ENCODE measurements at regions of chr16 and their contacts with region 1.

Region 1: DNA sequence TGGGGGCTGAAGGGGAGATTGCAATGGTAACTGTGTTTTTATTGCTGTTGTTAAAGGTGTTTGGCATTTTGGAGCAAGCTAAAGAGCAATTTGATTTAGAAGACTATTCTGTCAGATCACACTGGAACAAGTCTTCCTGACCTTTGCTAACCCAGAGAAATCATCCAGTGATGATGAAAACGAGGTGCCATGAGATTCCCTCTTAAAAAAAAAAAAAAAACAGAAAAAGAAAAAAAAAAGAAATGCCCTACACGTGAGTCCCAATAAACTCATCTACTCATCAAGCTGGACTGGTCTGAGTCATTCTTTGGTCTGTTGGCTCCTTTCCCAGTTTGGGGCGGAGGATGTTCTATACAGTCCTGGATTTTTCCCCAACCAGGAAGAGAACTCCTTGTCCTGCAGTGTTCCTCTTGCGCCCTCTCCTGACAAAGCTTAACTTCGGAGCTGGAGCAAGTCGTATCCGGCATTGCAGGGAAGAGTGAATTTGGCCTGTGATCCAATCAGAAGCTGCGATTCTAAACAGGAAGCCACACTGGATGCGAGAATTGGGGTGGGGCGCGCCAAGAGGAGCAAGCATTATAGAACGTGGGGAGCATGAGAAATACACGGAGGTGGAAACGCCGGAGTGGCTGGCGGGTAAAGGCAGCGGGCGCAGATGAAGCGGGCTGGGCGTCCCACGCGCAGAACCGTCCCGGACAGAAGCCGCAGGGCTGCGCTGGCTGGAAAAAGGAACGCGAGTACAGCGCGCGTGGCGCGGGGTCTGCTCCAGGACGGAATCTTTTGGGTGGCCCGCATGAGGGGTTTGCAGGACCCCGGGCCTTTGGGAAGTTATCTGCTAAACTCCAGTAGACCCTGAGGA is 22.4 kb upstream of the CRYM start:
- DNase-seq: peak; percentile 89 to 100 (median 89)
- ATAC-seq: peak; percentile 87
- H3K4me3 ChIP-seq: peak overlapping the region; percentile 20
- H3K4me1 ChIP-seq: peaks cover 3% of the 10 kb centered on the region
- CTCF ChIP-seq: peak; percentile 59

Region 2: GRCh38 chr16:21158208-21159110 is 142.1 kb before region 1 on chr16 and contains the start of gene LDAF1:
- intact Hi-C with region 1: loop called in 1 of 2 experiments (anchors 10 kb)
- DNase-seq: peak; percentile 92 to 94 (median 92)
- ATAC-seq: peak; percentile 96
- H3K4me3 ChIP-seq: peak within 1 kb of the TSS; percentile 62
- H3K4me1 ChIP-seq: peaks cover 17% of the 10 kb centered on the region
- CTCF ChIP-seq: no peak
- total RNA-seq, gene LDAF1: 34.3 to 66.6 (median 37.5) TPM